ENCODE measurements at regions of chr7 and their contacts with region 1.

Region 1: GRCh38 chr7:65037740-65038678 is 31.5 kb upstream of the ERV3-1 start:
- DNase-seq: peak; percentile 97
- ATAC-seq: peak; percentile 93
- H3K4me3 Mint-ChIP-seq: peak overlapping the region; percentile 82
- H3K27ac Mint-ChIP-seq: no peak overlapping the region
- H3K4me1 Mint-ChIP-seq: peaks cover 13% of the 10 kb centered on the region
- H3K27me3 Mint-ChIP-seq: no peaks in the 10 kb centered on the region

Region 2: GRCh38 chr7:64313740-64314491 is 724.1 kb before region 1 on chr7 and contains the start of gene ZNF736:
- CTCF ChIA-PET with region 1: no interaction called
- POLR2A ChIA-PET with region 1: no interaction called
- intact Hi-C with region 1: loop called in 1 of 2 experiments (anchors 1 kb)
- DNase-seq: peak; percentile 93
- ATAC-seq: peak; percentile 100
- H3K4me3 Mint-ChIP-seq: peak within 1 kb of the TSS; percentile 89
- H3K27ac Mint-ChIP-seq: peak within 1 kb of the TSS; percentile 99
- H3K4me1 Mint-ChIP-seq: peaks cover 30% of the 10 kb centered on the region
- H3K27me3 Mint-ChIP-seq: no peaks in the 10 kb centered on the region
- total RNA-seq, gene ZNF736: 23.5 to 25.5 TPM

Region 3: GRCh38 chr7:64794171-64794844 is 243.7 kb before region 1 on chr7 and contains the start of gene ZNF138:
- CTCF ChIA-PET with region 1: no interaction called
- POLR2A ChIA-PET with region 1: no interaction called
- intact Hi-C with region 1: loop called in 1 of 2 experiments (anchors 1 kb)
- DNase-seq: peak; percentile 97
- ATAC-seq: peak; percentile 100
- H3K4me3 Mint-ChIP-seq: peak within 1 kb of the TSS; percentile 97
- H3K27ac Mint-ChIP-seq: peak within 1 kb of the TSS; percentile 99
- H3K4me1 Mint-ChIP-seq: peaks cover 23% of the 10 kb centered on the region
- H3K27me3 Mint-ChIP-seq: no peaks in the 10 kb centered on the region
- total RNA-seq, gene ZNF138: 12.0 to 19.6 TPM

Region 4: DNA sequence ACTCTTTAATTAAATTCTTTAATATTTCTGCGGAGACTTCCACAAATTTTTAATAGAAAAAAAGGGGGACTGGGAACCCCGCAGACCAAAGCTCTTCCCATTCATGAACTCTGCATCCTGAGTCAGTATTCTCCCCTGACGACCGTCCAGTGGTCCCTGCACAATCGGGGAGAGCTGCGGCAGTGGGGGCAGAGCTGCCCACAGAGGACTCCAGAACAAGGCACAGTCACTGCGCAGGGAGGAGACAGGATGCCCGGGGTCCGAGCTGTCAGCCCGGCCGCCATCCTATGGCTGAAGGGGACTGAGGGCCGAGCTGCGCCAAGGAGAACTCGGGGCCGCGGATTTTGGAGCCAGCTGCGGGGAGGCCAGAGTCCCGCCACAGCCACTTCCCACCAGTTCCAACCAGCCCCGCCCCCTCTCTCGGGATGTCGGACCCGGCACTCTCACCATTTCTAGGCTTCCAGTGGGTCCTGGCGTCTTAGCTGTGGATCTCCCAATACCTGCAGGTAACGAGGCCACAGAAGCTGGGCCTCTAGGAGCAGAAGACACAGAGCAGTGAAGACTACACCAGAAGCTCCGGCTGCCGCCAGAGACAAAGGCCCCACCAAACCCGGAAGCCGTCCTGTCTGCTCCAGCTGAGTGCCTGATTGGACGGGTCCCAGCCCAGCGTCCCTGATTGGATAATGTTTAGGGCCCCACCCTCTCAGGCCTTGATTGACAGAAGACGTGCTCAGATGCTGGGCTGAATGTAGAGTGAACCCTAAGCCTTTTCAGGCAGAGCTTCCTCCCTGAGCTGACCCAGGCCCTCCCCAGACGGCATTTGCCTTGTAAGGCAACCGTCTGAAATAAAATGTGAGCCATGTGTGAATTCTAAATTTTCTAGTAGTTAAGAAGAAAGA is 31.7 kb before region 1 on chr7 and contains the start of gene ERV3-1:
- CTCF ChIA-PET with region 1: interaction called, 7 read pairs
- POLR2A ChIA-PET with region 1: interaction called, 13 read pairs
- intact Hi-C with region 1: loop called (anchors 1 kb)
- DNase-seq: peak; percentile 95
- ATAC-seq: peak; percentile 100
- H3K4me3 Mint-ChIP-seq: peak within 1 kb of the TSS; percentile 94
- H3K27ac Mint-ChIP-seq: peak within 1 kb of the TSS; percentile 92
- H3K4me1 Mint-ChIP-seq: peaks cover 27% of the 10 kb centered on the region
- H3K27me3 Mint-ChIP-seq: no peaks in the 10 kb centered on the region
- total RNA-seq, gene ERV3-1: 6.3 to 8.9 TPM

Measured in activated CD4-positive, alpha-beta T cell treated with anti-CD3 and anti-CD28 coated beads for 36 hours (primary cell).